Activated B cell treated with CpG ODN at 0.5 μM for 24 hours (primary cell): ENCODE measurements at regions of chr2 and their contacts with region 1.

Region 1: DNA sequence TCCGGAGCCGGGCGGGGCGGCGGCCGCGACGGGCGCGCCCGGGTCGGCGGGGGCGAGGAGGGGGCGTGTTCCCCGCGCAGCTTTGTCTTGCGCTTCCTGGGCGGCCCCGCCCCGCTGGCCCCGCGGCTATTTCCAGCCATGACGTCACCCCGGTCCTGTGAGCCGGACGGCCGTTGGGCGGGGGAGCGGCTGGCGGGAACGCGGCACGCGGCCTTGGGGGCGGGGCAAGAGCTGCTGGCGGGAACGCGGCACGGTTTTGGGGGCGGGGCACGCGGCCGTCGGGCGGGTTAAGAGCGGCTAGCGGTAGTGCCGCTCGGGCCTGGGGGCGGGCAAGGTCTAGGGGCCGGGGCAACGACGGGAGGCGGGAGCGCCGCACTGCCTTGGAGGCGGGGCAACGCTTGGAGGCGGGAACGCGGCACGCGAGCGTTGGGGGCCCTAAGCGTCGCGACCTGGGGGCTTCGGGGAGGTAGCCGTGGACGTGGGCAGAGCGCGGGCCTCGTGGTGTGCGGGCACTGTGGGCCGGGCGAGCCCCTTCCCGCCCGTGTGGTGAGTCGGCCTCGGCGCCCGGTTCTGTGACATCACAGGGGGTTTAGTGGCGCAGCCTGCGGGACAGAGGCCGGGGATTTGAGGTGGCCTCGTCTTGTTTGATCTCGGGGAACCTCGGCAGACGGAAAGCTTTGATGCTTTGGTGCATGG is 704 bp downstream of the KLF11 start:
- DNase-seq: peak; percentile 88
- ATAC-seq: peak; percentile 68
- H3K4me3 Mint-ChIP-seq: peak overlapping the region; percentile 76
- H3K27ac Mint-ChIP-seq: peak overlapping the region; percentile 72
- H3K4me1 Mint-ChIP-seq: peaks cover 26% of the 10 kb centered on the region
- H3K27me3 Mint-ChIP-seq: no peaks in the 10 kb centered on the region
- CTCF ChIP-seq: no peak

Region 2: GRCh38 chr2:9142551-9143263 is 901.3 kb before region 1 on chr2:
- CTCF ChIA-PET with region 1: no interaction called
- POLR2A ChIA-PET with region 1: no interaction called
- intact Hi-C with region 1: loop called (anchors 2 kb)
- DNase-seq: peak; percentile 74
- ATAC-seq: peak; percentile 91
- H3K4me3 Mint-ChIP-seq: peak overlapping the region; percentile 11
- H3K27ac Mint-ChIP-seq: no peak overlapping the region
- H3K4me1 Mint-ChIP-seq: peaks cover 6% of the 10 kb centered on the region
- H3K27me3 Mint-ChIP-seq: peaks cover 16% of the 10 kb centered on the region
- CTCF ChIP-seq: no peak

Region 3: GRCh38 chr2:9799665-9800632 is 244.1 kb before region 1 on chr2:
- CTCF ChIA-PET with region 1: interaction called, 18 read pairs
- POLR2A ChIA-PET with region 1: no interaction called
- intact Hi-C with region 1: loop called (anchors 1 kb)
- DNase-seq: peak; percentile 82
- ATAC-seq: peak; percentile 97
- H3K4me3 Mint-ChIP-seq: peak overlapping the region; percentile 50
- H3K27ac Mint-ChIP-seq: peak overlapping the region; percentile 42
- H3K4me1 Mint-ChIP-seq: peaks cover 20% of the 10 kb centered on the region
- H3K27me3 Mint-ChIP-seq: peaks cover 3% of the 10 kb centered on the region
- CTCF ChIP-seq: peak; percentile 65

Region 4: GRCh38 chr2:9843229-9844035 is 200.6 kb before region 1 on chr2 and contains the start of gene TAF1B:
- CTCF ChIA-PET with region 1: no interaction called
- POLR2A ChIA-PET with region 1: interaction called, 7 read pairs
- intact Hi-C with region 1: loop called (anchors 1 kb)
- DNase-seq: peak; percentile 86
- ATAC-seq: peak; percentile 87
- H3K4me3 Mint-ChIP-seq: peak within 1 kb of the TSS; percentile 94
- H3K27ac Mint-ChIP-seq: peak within 1 kb of the TSS; percentile 91
- H3K4me1 Mint-ChIP-seq: peaks cover 34% of the 10 kb centered on the region
- H3K27me3 Mint-ChIP-seq: no peaks in the 10 kb centered on the region
- CTCF ChIP-seq: no peak
- total RNA-seq, gene TAF1B: 26.4 and 28.7 TPM in 2 replicates

Region 5: GRCh38 chr2:9984217-9984739 is 59.8 kb before region 1 on chr2:
- CTCF ChIA-PET with region 1: interaction called, 208 read pairs
- POLR2A ChIA-PET with region 1: interaction called, 10 read pairs
- intact Hi-C with region 1: loop called (anchors 1 kb)
- DNase-seq: no peak
- ATAC-seq: peak; percentile 86
- H3K4me3 Mint-ChIP-seq: no peak overlapping the region
- H3K27ac Mint-ChIP-seq: no peak overlapping the region
- H3K4me1 Mint-ChIP-seq: peaks cover 6% of the 10 kb centered on the region
- H3K27me3 Mint-ChIP-seq: peaks cover 16% of the 10 kb centered on the region
- CTCF ChIP-seq: no peak

Region 6: DNA sequence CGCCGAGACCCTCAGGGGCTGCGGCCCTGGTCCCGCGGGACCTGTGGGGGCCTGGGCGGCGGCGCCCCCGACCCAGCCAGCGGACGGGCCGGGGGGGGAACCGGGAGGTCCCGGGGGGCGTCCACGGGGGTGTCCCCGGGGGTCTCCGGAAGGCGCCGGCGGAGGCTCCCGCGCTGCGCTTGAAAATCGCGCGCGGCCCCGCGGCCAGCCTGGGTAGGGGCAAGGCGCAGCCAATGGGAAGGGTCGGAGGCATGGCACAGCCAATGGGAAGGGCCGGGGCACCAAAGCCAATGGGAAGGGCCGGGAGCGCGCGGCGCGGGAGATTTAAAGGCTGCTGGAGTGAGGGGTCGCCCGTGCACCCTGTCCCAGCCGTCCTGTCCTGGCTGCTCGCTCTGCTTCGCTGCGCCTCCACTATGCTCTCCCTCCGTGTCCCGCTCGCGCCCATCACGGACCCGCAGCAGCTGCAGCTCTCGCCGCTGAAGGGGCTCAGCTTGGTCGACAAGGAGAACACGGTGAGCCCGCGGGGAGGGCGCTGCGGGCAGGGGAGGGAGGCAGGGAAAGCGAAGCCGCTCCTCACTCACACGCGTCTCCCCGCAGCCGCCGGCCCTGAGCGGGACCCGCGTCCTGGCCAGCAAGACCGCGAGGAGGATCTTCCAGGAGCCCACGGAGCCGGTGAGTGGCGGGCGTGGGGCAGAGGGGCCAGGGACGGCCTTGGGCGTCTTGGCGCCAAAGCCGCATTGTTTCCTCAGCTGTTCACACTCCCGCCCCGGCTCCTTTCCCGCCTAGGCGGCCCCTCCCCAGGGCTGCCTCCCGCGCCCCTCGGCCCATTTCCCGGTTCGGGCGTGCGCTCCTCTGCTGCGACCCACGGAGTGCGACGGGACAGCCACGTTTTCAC is 78.6 kb after region 1 on chr2 and contains the start of gene RRM2:
- CTCF ChIA-PET with region 1: no interaction called
- POLR2A ChIA-PET with region 1: no interaction called
- intact Hi-C with region 1: loop called (anchors 2 kb)
- DNase-seq: peak; percentile 77
- ATAC-seq: peak; percentile 82
- H3K4me3 Mint-ChIP-seq: peak within 1 kb of the TSS; percentile 97
- H3K27ac Mint-ChIP-seq: peak within 1 kb of the TSS; percentile 12
- H3K4me1 Mint-ChIP-seq: peaks cover 35% of the 10 kb centered on the region
- H3K27me3 Mint-ChIP-seq: peaks cover 8% of the 10 kb centered on the region
- CTCF ChIP-seq: no peak
- total RNA-seq, gene RRM2: 8.6 and 9.3 TPM in 2 replicates

Region 7: GRCh38 chr2:10239561-10239967 is 195.5 kb after region 1 on chr2:
- CTCF ChIA-PET with region 1: no interaction called
- POLR2A ChIA-PET with region 1: no interaction called
- intact Hi-C with region 1: no loop called
- DNase-seq: no peak
- ATAC-seq: no peak
- H3K4me3 Mint-ChIP-seq: no peak overlapping the region
- H3K27ac Mint-ChIP-seq: no peak overlapping the region
- H3K4me1 Mint-ChIP-seq: no peaks in the 10 kb centered on the region
- H3K27me3 Mint-ChIP-seq: peaks cover 9% of the 10 kb centered on the region
- CTCF ChIP-seq: no peak